Aorta (tissue), 5 donors: ENCODE measurements at regions of chr18 and their contacts with region 1.

Region 1: GRCh38 chr18:75691483-75691882 is 264.0 kb upstream of the SMIM21 start:
- DNase-seq: no peak
- ATAC-seq: no peak
- H3K4me3 ChIP-seq: no peak overlapping the region
- H3K27ac ChIP-seq: no peak overlapping the region
- H3K4me1 ChIP-seq: no peaks in the 10 kb centered on the region
- H3K27me3 ChIP-seq: no peaks in the 10 kb centered on the region

Region 2: DNA sequence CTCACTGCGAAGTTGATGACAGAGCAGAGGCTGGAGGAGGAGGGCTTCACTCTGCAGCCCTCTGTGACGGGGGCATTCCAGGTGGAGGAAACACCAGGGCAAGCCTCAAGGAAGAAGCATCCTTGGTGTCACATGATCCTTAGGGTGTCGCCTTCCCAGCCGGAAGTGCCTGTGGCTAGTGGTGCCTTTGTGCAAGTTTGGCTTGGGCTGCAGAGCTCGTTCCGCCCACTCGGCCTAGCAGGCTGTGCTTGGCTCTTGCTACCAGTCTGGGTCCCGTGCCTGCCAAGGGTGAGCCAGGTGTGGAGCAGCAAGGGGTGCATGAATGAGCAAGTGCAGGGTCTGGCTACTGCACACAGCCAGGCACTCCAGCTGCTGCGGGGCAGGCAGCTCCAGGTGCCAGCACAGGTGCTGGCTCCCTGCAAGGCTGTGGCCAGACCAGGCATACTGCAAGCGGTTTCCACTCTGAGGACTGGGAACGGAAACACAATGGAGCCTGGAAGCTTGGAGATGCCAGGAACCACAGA is 61.3 kb after region 1 on chr18:
- intact Hi-C with region 1: loop called in 1 of 2 experiments (anchors 10 kb)
- DNase-seq: no peak
- ATAC-seq: no peak
- H3K4me3 ChIP-seq: no peak overlapping the region
- H3K27ac ChIP-seq: no peak overlapping the region
- H3K4me1 ChIP-seq: no peaks in the 10 kb centered on the region
- H3K27me3 ChIP-seq: no peaks in the 10 kb centered on the region

Region 3: GRCh38 chr18:76657428-76657827 is 965.9 kb after region 1 on chr18:
- intact Hi-C with region 1: no loop called
- DNase-seq: no peak
- ATAC-seq: no peak
- H3K4me3 ChIP-seq: no peak overlapping the region
- H3K27ac ChIP-seq: no peak overlapping the region
- H3K4me1 ChIP-seq: no peaks in the 10 kb centered on the region
- H3K27me3 ChIP-seq: no peaks in the 10 kb centered on the region